AG04450 (cell line): ENCODE measurements at regions of chrX and their contacts with region 1.

Region 1: GRCh38 chrX:50691820-50692219 is 122.2 kb downstream of the SHROOM4 start:
- DNase-seq: peak; percentile 3
- H3K4me3 ChIP-seq: no peak overlapping the region
- H3K27ac ChIP-seq: no peak overlapping the region
- H3K27me3 ChIP-seq: no peaks in the 10 kb centered on the region
- CTCF ChIP-seq: peak; percentile 61

Region 2: DNA sequence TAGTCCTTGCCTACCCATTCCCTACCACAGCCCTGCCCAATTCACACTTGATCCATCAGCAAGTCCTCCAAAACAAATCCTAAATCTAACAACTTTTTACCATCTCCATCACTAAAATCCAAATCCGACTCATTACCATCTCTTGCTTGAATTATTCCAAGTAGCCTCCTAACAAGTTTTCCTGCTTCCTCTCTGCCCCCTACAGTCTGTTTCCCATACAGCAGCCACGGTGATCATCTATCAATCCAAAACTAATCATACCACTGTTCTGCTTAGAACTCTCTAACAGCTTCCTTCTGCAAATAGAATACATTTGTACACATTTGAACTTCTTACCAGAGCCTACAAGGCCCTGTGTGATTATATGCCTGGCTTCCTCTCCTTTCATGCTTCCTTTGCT is 10.8 kb before region 1 on chrX:
- CTCF ChIA-PET with region 1: interaction called, 30 read pairs
- POLR2A ChIA-PET with region 1: no interaction called
- DNase-seq: no peak
- H3K4me3 ChIP-seq: no peak overlapping the region
- H3K27ac ChIP-seq: no peak overlapping the region
- H3K27me3 ChIP-seq: no peaks in the 10 kb centered on the region
- CTCF ChIP-seq: peak; percentile 38

Region 3: DNA sequence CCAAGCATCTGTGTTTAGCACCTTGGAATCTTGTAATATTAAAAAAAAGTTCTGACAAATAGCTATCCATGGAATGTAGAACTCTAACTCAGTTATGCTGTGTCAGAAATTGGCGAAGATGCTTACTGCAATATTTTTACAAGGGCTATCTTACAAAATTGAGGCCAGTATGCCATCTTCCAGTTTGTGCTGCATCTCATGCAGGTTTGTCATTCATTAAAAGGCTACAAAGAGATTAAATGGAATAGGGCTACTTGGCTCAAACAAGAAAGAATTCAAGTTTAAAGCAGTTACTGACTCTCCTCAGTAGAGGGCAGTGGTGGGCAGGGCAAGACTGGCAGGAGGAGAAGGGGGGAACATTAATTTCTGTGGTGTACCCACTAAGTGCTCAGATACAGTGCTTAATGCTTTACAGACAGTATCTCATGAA is 55.7 kb after region 1 on chrX:
- CTCF ChIA-PET with region 1: interaction called, 23 read pairs
- POLR2A ChIA-PET with region 1: no interaction called
- DNase-seq: no peak
- H3K4me3 ChIP-seq: no peak overlapping the region
- H3K27ac ChIP-seq: no peak overlapping the region
- H3K27me3 ChIP-seq: no peaks in the 10 kb centered on the region
- CTCF ChIP-seq: peak; percentile 74

Region 4: DNA sequence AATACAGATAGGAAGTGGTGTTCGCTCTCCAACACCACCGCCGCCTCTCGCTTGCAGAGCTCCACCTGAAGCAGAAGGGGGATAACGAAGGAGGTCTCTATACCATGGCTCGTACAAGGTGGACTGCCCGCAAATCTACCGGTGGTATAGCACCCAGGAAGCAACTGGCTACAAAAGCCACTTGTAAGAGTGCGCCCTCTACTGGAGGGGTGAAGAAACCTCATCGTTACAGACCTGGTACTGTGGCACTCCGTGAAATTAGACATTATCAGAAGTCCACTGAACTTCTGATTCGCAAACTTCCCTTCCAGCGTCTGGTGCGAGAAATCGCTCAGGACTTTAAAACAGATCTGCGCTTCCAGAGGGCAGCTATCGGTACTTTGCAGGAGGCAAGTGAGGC is 213.5 kb after region 1 on chrX:
- CTCF ChIA-PET with region 1: interaction called, 58 read pairs
- POLR2A ChIA-PET with region 1: no interaction called
- DNase-seq: no peak
- H3K4me3 ChIP-seq: no peak overlapping the region
- H3K27ac ChIP-seq: no peak overlapping the region
- H3K27me3 ChIP-seq: peaks cover 2% of the 10 kb centered on the region
- CTCF ChIP-seq: peak; percentile 17; the same call in 1 of the 2 replicates

Region 5: DNA sequence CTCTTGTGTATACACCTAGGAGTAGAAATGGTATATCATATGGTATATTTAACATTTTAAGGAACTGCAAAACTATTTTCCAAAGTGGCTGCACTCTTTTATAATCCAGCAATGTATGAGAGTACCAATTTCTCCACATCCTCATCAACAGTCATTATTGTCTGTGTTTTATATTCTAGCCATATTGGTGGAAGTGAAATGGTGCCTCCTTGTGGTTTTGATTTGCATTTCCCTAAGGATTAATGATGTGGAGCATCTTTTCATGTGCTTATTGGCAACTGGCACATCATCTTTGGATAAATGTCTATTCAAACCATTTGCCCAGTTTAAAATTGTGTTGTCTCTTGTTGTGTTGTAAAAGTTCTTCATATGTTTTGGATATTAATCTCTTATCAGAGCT is 228.3 kb after region 1 on chrX:
- CTCF ChIA-PET with region 1: interaction called, 34 read pairs
- POLR2A ChIA-PET with region 1: no interaction called
- DNase-seq: no peak
- H3K4me3 ChIP-seq: no peak overlapping the region
- H3K27ac ChIP-seq: no peak overlapping the region
- H3K27me3 ChIP-seq: no peaks in the 10 kb centered on the region
- CTCF ChIP-seq: peak; percentile 51

Region 6: GRCh38 chrX:50988649-50989048 is 296.8 kb after region 1 on chrX:
- CTCF ChIA-PET with region 1: interaction called, 16 read pairs
- POLR2A ChIA-PET with region 1: no interaction called
- DNase-seq: no peak
- H3K4me3 ChIP-seq: no peak overlapping the region
- H3K27ac ChIP-seq: no peak overlapping the region
- H3K27me3 ChIP-seq: no peaks in the 10 kb centered on the region
- CTCF ChIP-seq: peak; percentile 52